GM13977 (cell line): ENCODE measurements at regions of chr9 and their contacts with region 1.

Region 1: DNA sequence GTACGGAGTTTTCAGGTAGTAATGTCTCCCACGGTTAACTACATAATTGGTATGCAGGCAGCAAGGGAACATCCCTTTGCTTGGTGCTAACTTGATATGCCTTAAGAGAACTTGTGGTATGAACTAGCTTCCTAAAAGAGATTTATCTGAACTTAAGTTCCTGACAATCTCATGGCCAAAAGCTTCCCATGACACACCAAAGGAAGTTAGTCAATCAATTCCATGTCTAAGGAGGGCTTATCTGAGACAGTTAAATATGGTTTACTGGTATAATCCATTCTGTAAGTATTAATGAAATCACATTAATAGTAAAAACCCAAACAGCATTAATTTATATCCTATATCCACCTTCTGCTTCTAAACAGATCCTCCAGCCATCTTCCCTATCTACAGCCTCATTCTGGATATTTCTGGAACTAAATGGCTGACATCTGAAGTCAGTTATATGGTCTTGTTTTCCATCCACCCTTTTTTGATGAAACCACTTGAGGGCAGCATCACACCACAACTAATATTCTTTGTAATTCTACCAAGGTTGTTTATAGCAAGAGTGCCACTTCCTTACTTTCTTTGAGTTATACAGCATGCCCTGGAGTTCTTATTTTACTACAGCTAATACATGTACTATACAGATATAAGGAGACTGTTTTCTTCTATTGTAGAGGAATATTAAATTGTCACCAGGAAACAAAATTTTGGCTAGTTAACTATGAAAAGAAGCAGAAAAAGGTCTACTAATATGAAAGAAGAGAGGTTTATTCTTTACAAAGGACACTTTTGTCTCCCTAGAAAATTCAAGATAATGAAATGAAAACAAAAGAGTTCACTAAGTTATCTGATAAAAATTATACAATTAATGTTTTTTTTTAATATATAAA is 34.7 kb downstream of the SHOC1 start:
- DNase-seq: peak; percentile 48
- CTCF ChIP-seq: peak; percentile 59

Region 2: DNA sequence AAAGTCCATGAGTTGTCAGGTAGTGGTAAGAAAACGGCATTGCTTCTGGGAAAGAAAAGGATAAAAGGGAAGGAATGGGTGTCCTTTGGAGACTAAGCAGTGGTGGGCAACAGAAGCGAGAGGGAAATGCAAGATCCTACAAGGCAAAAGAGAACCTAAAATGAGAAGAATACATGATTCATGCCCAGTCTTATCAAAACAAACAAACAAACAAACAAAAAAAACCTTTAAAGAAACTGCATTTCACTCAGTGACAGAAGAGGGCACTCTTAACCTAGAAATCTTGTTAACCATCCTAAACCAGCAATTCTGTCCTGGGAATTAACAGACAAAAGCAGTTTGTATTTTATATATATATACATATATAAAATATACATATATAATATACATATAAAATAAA is 326.6 kb after region 1 on chr9:
- in situ Hi-C with region 1: loop called (anchors 10 kb)
- DNase-seq: no peak
- CTCF ChIP-seq: peak; percentile 59

Region 3: DNA sequence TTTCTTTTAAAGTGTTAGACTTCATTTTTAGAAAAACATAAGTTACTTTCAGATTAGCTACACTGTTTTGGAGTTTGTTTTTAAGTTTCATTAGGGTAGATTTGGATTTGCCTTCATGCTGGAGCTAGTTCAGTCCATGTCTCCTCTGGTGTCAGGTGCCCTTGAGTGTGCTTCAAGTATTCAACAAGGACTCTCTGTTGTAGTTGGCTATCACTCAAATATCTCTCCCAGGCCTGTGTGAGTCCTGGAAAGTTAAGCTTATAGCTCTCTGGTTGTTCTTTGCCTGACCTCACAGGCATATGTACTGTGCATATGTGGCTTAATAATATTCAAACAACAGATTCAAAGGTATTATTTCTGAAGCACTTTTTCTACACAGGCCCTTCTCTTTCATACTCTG is 528.0 kb after region 1 on chr9:
- in situ Hi-C with region 1: no loop called
- DNase-seq: no peak
- CTCF ChIP-seq: no peak

Region 4: DNA sequence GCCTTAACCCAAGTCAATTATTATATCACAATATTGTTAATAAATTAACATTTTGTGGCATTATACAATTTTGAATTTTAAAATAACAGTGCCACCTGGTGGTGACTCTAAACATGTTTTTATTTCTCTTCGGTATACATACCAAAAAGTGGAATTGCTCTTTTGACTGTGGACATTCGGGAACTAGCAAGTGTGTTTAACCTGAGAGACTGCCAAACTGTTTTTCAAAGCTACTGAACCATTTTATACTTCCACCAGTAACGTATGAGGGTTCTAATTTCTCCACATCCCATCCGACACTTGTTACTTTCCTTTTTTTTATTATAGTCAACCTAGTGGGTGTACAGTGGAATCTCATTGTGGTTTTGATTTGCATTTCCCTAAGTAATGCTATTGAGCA is 601.6 kb after region 1 on chr9:
- in situ Hi-C with region 1: loop called (anchors 25 kb)
- DNase-seq: no peak
- CTCF ChIP-seq: peak; percentile 47

Region 5: DNA sequence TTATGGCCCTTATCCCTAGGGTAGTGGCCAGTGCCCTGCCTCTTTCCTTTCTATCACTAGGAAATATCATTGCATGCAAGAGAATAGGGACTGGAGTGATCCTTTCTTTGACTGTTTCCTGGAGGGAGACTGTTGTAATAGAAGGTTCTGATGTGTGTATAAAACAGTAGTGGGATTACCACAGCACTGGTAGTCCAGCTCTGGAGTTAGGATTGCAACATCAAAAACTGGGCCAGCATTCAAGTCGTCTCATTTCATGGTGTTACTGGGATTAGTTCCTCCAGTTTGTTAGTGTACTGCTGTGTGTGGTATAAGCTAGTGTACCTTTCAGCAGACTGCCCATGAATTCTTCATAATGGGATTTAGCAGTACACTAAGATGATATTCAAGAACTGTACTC is 772.4 kb after region 1 on chr9:
- in situ Hi-C with region 1: no loop called
- DNase-seq: no peak
- CTCF ChIP-seq: no peak

Region 6: GRCh38 chr9:112586599-112587155 is 826.7 kb after region 1 on chr9:
- in situ Hi-C with region 1: no loop called
- DNase-seq: no peak
- CTCF ChIP-seq: no peak